Endothelial cell of umbilical vein (primary cell): ENCODE measurements at regions of chr7 and their contacts with region 1.

Region 1: DNA sequence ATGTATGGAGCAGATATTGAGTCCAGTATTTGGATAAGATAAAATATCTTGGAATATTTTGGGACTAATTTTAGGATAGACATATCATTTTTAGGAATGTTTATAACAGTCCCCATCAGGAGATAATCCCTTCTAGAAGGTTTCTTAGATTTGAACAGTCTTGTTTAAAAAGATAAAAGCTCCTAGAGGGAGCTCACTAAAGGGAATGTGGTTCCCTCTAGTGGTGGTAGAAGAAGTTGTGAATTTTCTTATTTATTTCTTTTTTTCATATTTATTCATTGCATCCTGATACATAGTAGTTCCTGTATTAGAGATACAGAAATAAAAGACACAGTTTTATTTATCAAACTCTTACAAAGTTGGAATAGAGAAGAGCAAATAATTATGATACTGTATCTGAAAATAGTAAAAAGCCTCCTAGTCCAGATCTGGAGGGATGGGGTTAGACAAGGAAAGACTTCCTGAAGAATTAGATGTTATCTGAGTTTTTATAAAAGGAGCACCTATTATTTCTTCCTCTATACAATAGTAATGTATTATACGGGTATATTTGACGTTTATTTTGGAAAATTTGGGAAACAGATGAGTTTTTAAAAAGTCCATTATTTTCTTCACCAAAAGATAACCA is 24.5 kb upstream of the KLF14 start:
- DNase-seq: peak; percentile 58
- H3K4me3 ChIP-seq: no peak overlapping the region
- H3K27ac ChIP-seq: no peak overlapping the region
- H3K4me1 ChIP-seq: no peaks in the 10 kb centered on the region
- H3K27me3 ChIP-seq: peaks cover 11 to 17% of the 10 kb centered on the region in 2 experiments
- CTCF ChIP-seq: peak; percentile 40 to 45
- POLR2A ChIP-seq: no peak

Region 2: DNA sequence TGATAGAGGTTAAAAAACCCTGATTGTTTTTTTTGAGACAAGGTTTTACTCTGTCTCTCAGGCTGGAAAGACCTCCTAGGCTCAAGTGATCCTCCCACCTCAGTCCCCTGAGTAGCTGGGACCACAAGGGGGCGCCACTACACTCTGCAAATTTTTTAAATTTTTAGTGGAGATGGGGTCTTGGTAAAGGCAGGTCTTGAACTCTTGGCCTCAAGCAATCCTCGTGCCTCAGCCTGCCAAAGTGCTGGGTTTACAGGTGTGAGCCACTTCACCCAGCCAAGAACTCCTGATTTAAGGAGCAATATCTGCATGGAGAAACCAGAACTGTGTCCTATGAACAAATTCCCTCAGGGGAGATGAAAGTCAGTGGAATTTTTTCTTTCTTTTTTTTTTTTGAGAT is 695.5 kb before region 1 on chr7:
- CTCF ChIA-PET with region 1: interaction called, 33 read pairs
- POLR2A ChIA-PET with region 1: no interaction called
- dilution Hi-C with region 1: no loop called
- intact Hi-C with region 1: loop called (anchors 1 kb)
- DNase-seq: peak; percentile 48
- H3K4me3 ChIP-seq: no peak overlapping the region
- H3K27ac ChIP-seq: no peak overlapping the region
- H3K4me1 ChIP-seq: peaks cover 8% of the 10 kb centered on the region
- H3K27me3 ChIP-seq: no peaks in the 10 kb centered on the region
- CTCF ChIP-seq: peak; percentile 78 to 86
- POLR2A ChIP-seq: no peak

Region 3: DNA sequence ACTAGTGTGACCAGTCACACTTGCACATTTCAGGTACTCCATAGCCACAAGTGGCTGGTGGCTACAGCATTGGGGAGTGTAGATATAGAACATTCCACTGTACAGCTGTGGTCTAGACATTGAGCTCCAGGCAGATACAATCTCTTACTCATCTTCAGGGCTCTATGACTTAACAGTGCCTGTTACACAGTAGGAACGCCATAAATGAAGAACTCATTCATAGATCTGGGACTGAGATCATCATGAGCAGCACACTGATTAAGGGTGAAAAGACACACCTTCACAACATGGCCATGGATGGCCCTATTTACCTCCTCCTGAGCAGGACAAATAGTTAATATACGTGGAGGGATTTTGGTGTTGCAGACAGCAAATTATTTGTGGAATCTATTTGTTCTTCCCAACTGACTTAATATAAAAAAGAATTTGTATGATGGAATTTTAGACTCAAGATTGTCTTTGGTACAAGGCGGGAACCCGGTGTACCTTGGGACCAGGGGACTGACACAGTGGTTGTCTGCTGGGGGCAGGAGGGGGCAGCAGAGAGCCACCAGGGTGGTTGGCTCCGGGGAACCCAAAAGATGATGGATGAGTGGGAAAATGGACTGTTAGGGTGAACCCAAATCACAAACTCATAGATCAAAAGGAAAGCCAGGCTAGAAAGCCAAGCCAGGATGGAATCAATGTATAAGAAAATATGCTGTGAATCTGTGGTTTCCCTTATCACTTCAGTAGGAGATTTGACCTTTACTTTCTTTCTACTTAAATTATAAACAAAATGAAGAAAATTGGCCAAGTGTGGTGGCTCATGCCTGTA is 516.1 kb before region 1 on chr7:
- CTCF ChIA-PET with region 1: interaction called, 73 read pairs
- POLR2A ChIA-PET with region 1: no interaction called
- dilution Hi-C with region 1: no loop called
- intact Hi-C with region 1: loop called (anchors 1 kb)
- DNase-seq: peak; percentile 50
- H3K4me3 ChIP-seq: no peak overlapping the region
- H3K27ac ChIP-seq: no peak overlapping the region
- H3K4me1 ChIP-seq: no peaks in the 10 kb centered on the region
- H3K27me3 ChIP-seq: peaks cover 0 to 2% of the 10 kb centered on the region in 2 experiments
- CTCF ChIP-seq: peak; percentile 80 to 92
- POLR2A ChIP-seq: no peak

Region 4: DNA sequence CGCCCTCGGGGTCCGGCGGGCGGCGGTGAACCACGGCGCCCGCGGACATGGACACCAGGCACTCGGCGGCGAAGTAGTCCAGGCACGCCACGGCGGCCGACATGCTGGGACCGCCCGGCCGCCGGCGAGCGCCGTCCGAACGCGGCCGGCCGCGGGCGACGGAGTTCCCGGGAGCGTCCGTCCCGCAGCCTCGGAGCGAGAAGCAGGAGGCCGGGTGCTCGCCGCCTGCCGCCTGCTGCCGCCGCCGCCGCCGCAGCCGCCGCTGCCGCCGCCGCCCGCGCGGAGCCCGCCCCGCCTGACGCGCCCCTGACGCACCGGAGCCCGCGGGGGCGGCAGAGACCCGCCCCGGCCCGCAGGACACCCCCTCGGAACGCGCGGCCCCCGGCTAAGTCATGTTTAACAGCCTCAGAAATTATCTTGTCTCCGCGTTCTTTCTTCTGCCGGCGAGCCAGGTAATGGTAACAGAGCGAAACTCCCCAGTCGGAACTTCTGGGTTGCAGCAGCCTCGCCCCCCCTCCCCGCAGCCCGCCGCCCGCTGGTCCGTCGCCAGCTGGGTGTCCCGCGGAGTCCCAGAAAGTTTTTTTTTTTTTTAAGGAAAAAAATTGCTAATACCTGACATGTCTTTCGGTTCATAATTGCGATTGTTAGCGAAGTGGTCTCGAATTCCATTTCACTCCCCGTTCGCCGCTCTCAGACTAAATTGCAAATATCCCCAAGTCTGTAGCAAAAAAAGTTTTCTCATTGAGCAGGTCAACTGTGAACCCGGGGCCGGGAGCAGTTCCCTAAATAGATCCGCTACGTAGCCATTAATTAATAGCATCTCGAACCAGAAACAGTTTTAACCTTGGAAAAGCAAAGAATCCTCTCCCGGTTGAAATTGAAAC is 24.4 kb before region 1 on chr7 and contains the start of gene KLF14:
- CTCF ChIA-PET with region 1: interaction called, 11 read pairs
- POLR2A ChIA-PET with region 1: no interaction called
- dilution Hi-C with region 1: no loop called
- intact Hi-C with region 1: no loop called
- DNase-seq: no peak
- H3K4me3 ChIP-seq: peak within 1 kb of the TSS; percentile 64 to 93 (median 83)
- H3K27ac ChIP-seq: no peak within 1 kb of the TSS
- H3K4me1 ChIP-seq: peaks cover 6% of the 10 kb centered on the region
- H3K27me3 ChIP-seq: peaks cover 43 to 90% of the 10 kb centered on the region in 2 experiments
- CTCF ChIP-seq: no peak
- POLR2A ChIP-seq: no peak
- total RNA-seq, gene KLF14: not detected in 2 replicates

Region 5: DNA sequence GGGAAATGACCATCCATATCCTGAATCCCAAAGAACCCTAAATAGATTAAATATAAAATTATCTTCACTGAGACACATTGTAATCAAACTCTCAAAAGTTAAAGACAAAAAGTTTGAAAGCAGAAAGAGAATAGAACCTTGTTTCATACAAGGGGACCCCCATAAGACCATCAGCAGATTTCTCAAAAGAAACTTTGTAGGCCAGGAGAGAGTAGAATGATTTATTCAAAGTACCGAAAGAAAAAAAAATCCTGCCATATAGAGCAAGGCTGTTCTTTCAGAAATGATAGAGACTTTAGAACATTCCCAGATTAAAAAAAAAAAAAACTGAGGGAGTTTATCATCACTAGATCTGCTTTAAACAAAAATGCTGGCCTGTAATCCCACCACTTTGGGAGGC is 10.3 kb after region 1 on chr7:
- CTCF ChIA-PET with region 1: interaction called, 10 read pairs
- POLR2A ChIA-PET with region 1: no interaction called
- dilution Hi-C with region 1: no loop called
- intact Hi-C with region 1: no loop called
- DNase-seq: no peak
- H3K4me3 ChIP-seq: no peak overlapping the region
- H3K27ac ChIP-seq: no peak overlapping the region
- H3K4me1 ChIP-seq: no peaks in the 10 kb centered on the region
- H3K27me3 ChIP-seq: peaks cover 2 to 11% of the 10 kb centered on the region in 2 experiments
- CTCF ChIP-seq: no peak
- POLR2A ChIP-seq: no peak

Region 6: DNA sequence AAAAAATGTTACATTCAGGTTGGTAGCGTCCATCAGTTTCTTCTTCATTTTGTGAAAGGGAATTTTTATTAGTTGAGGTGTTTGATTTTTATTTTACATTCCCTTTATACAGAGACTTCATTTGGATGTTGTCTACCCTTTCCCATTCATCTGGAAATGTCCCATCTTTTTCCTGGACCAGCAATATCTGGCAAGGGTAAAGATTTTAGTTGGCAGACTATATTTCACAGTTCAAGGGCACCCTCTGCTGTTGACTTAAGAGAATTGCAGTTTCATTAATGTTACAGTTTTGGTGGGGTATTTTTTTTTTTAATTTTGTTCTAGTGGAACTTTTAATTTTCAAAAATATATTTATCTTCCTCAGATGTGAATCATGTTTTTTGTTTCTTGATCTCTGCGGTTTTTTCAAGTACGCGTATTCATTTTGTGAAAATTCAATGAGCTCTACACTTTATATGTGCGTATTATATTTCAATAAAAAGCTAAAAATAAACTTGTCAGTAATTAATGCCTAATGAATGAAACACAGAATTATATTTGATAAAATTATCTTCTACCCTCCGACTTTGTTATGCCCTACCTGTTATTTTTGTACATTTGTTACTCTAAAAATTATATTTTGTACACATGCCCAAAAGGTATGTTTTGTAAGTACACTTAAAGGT is 73.4 kb after region 1 on chr7:
- CTCF ChIA-PET with region 1: interaction called, 20 read pairs
- POLR2A ChIA-PET with region 1: no interaction called
- dilution Hi-C with region 1: no loop called
- intact Hi-C with region 1: loop called (anchors 10 kb)
- DNase-seq: peak; percentile 35
- H3K4me3 ChIP-seq: no peak overlapping the region
- H3K27ac ChIP-seq: no peak overlapping the region
- H3K4me1 ChIP-seq: peaks cover 10% of the 10 kb centered on the region
- H3K27me3 ChIP-seq: no peaks in the 10 kb centered on the region
- CTCF ChIP-seq: peak; percentile 46 to 52
- POLR2A ChIP-seq: no peak

Region 7: DNA sequence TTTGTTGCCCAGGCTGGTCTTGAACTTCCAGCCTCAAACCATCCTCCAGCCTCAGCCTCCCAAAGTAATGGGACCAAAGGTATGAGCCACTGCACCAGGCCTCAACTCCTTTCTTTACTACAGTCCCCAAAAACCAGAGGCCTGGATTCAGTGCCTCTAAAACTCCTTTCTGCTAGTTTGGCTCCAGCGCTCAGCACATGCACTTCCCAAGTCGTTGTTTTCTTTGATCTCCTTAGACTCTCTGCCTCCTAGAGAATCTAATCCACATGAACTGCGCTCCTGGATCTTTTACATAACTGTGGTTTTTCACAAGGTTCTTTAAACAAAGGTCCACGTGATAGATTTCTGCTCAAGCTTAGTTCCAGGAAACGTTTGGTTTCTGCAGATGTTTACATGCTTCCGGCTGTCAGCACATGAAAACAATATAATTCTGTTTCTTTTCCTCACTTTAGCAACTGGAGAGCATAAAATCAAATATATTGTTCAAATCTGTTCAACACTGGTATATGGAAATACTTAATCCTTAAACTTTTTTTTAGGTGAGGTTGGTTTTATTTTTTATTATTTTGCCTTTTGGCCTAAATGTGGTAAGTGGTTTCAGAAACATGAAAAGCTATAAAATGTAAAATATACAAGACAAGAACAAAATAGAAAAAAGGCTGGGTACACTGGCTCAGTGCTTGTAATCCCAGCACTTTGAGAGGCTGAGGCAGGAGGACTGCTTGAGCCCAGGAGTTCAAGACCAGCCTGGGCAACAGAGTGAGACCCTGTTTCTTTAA is 298.7 kb after region 1 on chr7:
- CTCF ChIA-PET with region 1: no interaction called
- POLR2A ChIA-PET with region 1: no interaction called
- dilution Hi-C with region 1: no loop called
- intact Hi-C with region 1: no loop called
- DNase-seq: peak; percentile 75
- H3K4me3 ChIP-seq: no peak overlapping the region
- H3K27ac ChIP-seq: peak overlapping the region; percentile 64
- H3K4me1 ChIP-seq: peaks cover 9% of the 10 kb centered on the region
- H3K27me3 ChIP-seq: no peaks in the 10 kb centered on the region
- CTCF ChIP-seq: no peak
- POLR2A ChIP-seq: no peak